ENCODE measurements at regions of chr4 and their contacts with region 1.

Region 1: DNA sequence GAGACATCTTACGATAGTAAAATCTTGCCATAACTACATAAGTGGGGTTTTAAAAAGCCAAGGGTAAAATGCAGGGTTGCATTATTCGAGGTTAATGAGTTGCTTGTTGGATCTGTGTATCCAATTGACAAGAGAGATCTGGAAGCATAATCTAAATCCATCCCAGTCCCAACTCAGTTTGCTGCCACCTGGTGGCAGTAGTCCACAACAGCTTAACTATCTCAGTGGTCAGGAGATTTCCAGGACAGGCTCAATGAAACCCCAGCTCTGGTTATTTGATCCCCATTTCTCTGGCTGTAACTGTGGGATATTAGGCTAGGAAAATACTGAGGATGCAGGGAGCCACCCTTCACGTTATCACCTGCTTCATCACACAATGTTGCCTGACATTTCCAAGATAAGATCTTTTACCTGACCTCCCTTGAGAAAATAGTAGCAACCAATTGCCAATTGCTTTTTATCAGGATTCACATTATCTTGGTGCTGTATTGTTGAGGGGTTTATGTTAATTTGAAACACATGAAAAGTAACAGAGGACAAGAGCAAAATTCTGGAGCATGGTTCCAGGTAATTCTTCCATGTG is 88.2 kb upstream of the TNIP3 start:
- DNase-seq: peak; percentile 58 to 90
- H3K4me3 ChIP-seq: no peak overlapping the region
- CTCF ChIP-seq: no peak
- POLR2A ChIP-seq: no peak

Region 2: DNA sequence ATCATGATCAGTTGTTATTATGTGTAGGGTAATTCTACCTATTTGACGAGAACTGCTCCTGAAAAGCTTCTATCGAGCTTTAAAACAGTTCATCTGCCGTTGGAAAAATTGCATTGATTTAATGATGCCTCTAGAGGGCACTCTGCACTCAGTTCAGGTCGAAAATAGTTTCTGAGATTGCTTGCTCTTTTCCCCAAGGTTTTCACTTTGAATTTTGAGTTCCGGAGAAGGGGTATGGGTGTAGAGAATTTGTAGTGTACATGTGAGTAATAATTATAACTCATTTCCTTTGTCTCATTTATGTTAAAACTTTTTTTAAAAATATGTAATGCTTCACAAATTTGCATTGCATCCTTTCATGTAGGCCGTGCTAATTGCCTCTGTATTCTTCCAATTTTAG is 59.8 kb before region 1 on chr4:
- intact Hi-C with region 1: loop called (anchors 10 kb)
- DNase-seq: no peak
- H3K4me3 ChIP-seq: no peak overlapping the region
- CTCF ChIP-seq: no peak
- POLR2A ChIP-seq: no peak